Kidney (tissue), 22 donors: ENCODE measurements at regions of chr4 and their contacts with region 1.

Region 1: DNA sequence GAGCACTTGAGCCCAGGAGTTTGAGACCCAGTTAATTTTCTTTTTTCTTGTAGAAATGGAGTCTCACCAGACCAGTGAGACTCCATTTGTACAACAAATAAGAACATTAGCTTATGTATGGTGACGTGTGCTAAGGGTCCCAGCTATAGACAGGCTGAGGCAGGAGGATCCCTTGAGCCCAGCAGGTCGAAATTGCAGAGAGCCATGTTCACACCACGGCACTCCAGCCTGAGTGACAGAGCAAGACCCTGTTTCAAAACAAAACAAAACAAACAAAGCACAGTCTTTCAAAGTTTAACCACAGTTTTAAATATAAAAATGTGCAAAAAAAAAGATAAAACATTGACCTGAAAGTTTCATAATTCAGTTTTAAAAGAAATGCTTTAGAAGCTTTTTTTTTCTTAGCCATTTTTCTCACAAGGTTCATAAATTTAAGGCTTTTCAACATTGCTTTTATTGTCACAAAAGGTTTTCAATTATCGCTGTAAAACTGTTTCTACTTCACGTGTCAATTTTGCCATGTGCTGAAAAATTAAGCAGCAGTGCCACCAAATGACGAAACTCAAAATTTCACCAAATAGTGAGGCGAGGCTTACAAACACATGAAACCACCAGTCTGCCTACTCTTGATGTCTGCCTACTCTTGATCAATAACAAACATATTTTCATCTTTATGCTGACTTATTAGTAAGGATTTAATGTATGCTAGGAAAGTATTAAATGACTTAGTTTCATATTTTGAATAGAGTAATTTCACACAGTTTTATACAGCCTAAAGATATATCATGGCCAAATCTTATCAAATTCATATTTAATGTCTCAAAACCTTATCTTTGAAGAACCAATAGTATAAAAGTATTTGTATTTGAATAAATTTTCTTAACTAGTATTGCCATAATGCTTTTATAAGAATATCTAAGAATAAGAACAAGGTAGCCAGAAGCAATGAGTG is 126.3 kb downstream of the NEK1 start:
- DNase-seq: peak in 4 of 5 donors; percentile 45 to 86 (median 72)
- H3K4me3 ChIP-seq: no peak overlapping the region
- H3K27ac ChIP-seq: no peak overlapping the region
- H3K4me1 ChIP-seq: no peaks in the 10 kb centered on the region
- H3K27me3 ChIP-seq: no peaks in the 10 kb centered on the region
- CTCF ChIP-seq: peak; percentile 63

Region 2: DNA sequence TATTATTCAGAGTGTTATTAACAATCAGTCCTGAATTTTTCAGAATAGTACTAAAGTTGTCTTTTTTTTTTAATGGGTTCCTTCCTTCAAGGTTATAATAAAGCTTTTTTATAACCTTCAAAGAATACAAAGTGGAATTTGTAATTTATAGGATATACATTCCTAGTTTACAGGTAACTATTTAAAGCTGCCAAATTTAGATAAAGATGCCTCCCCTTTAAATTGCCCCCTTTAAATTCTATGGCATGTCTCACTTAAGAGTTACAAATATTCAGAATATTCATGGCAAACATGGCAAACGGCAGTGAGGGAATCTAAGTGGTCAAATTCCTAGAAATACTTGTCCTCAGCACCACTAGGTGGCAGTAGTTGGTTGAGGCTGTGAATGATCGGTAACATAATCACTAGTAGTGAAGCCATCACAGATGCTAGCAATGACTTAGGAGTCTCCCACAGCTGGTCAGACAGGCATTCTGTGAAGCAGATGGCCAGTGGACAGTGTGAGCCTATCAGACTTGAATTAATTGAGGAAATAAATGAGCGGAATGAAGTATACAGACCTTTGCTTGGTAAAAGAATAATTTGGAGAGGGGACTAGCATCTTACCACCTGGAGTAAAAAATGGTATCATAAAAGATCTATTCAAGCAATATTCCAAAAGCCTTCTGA is 562.4 kb before region 1 on chr4:
- intact Hi-C with region 1: loop called (anchors 10 kb)
- DNase-seq: peak in 4 of 5 donors; percentile 62 to 88 (median 76)
- H3K4me3 ChIP-seq: no peak overlapping the region
- H3K27ac ChIP-seq: no peak overlapping the region
- H3K4me1 ChIP-seq: peaks cover 0 to 5% (median 2%) of the 10 kb centered on the region in 3 donors
- H3K27me3 ChIP-seq: no peaks in the 10 kb centered on the region
- CTCF ChIP-seq: peak; percentile 75

Region 3: DNA sequence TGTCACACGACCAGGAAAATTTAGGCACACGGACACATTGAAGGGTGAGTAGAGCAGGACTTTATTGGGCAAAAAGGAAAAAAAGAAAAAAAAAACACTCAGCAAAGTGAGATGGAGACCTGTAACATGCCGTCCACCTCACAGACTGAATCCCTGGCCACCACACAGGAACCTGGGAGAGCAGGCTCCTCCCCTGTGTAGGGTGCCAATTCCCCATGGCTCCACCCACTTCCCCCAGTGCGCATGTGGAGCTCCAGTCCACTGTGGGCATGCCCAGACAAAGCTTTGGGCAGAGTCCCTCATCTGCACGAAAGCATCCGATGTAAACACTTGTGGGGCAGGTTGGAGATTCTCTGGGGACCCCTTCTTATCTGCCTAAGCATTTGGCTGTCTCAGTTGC is 452.4 kb before region 1 on chr4:
- intact Hi-C with region 1: loop called (anchors 10 kb)
- DNase-seq: no peak
- H3K4me3 ChIP-seq: no peak overlapping the region
- H3K27ac ChIP-seq: no peak overlapping the region
- H3K4me1 ChIP-seq: no peaks in the 10 kb centered on the region
- H3K27me3 ChIP-seq: no peaks in the 10 kb centered on the region
- CTCF ChIP-seq: no peak

Region 4: GRCh38 chr4:169398316-169398715 is 87.8 kb before region 1 on chr4:
- intact Hi-C with region 1: no loop called
- DNase-seq: peak in 1 of 5 donors; percentile 23
- H3K4me3 ChIP-seq: no peak overlapping the region
- H3K27ac ChIP-seq: no peak overlapping the region
- H3K4me1 ChIP-seq: no peaks in the 10 kb centered on the region
- H3K27me3 ChIP-seq: no peaks in the 10 kb centered on the region
- CTCF ChIP-seq: no peak